GM12878 (cell line): ENCODE measurements at regions of chr5 and their contacts with region 1.

Region 1: GRCh38 chr5:45578270-45578669 is 117.9 kb downstream of the HCN1 start:
- DNase-seq: no peak
- ATAC-seq: no peak
- H3K4me3 ChIP-seq: no peak overlapping the region
- H3K27ac ChIP-seq: no peak overlapping the region
- H3K4me1 ChIP-seq: no peaks in the 10 kb centered on the region
- H3K27me3 ChIP-seq: no peaks in the 10 kb centered on the region
- CTCF ChIP-seq: no peak
- EP300 ChIP-seq: no peak
- POLR2A ChIP-seq: no peak
- RAD21 ChIP-seq: no peak

Region 2: DNA sequence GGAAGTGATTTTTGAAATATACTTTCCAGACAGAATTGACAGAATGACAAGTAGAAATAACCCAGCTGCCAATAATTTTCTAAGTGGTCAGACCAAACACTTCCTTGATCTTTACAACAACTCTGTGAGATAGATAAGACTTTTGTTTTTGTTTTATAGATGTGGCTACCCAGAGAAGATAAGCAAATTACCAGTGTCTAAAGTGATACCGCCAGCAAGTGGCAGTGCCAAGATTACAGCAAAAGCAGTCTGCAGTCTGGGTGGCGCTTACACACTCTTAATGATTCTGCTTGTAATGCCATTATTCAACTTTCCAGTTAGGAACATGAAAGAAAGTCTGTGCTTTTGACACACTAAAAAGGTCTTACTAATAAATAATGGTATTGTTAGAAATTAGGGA is 25.8 kb after region 1 on chr5:
- CTCF ChIA-PET with region 1: no interaction called
- POLR2A ChIA-PET with region 1: no interaction called
- RAD21 ChIA-PET with region 1: no interaction called
- SMC1A ChIA-PET with region 1: no interaction called
- in situ Hi-C with region 1: no loop called
- intact Hi-C with region 1: no loop called
- DNase-seq: no peak
- ATAC-seq: no peak
- H3K4me3 ChIP-seq: no peak overlapping the region
- H3K27ac ChIP-seq: no peak overlapping the region
- H3K4me1 ChIP-seq: no peaks in the 10 kb centered on the region
- H3K27me3 ChIP-seq: no peaks in the 10 kb centered on the region
- CTCF ChIP-seq: no peak
- EP300 ChIP-seq: no peak
- POLR2A ChIP-seq: no peak
- RAD21 ChIP-seq: no peak

Region 3: GRCh38 chr5:45617859-45618416 is 39.7 kb after region 1 on chr5:
- CTCF ChIA-PET with region 1: no interaction called
- POLR2A ChIA-PET with region 1: no interaction called
- RAD21 ChIA-PET with region 1: no interaction called
- SMC1A ChIA-PET with region 1: no interaction called
- in situ Hi-C with region 1: no loop called
- intact Hi-C with region 1: loop called (anchors 1 kb)
- DNase-seq: no peak
- ATAC-seq: no peak
- H3K4me3 ChIP-seq: no peak overlapping the region
- H3K27ac ChIP-seq: no peak overlapping the region
- H3K4me1 ChIP-seq: no peaks in the 10 kb centered on the region
- H3K27me3 ChIP-seq: no peaks in the 10 kb centered on the region
- CTCF ChIP-seq: no peak
- EP300 ChIP-seq: no peak
- POLR2A ChIP-seq: no peak
- RAD21 ChIP-seq: no peak

Region 4: DNA sequence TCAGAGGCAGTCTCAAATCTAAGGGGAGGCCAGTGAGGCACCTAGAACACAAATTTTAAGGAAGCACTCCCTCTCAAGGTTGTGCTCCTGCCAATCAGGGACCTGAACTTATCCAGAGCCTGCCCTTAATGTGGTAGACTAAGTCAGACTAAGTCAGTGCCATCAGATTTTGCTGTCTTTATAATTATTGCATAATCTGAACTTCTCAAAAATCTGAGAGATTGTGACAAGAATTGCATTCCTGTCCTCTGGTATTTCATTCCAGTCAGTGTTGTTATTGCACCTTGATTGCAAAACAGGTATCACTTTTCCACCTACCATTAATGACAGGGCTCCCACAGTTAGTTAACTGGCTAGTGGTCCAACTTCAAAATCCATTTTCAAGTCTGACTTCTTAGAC is 315.0 kb after region 1 on chr5:
- CTCF ChIA-PET with region 1: no interaction called
- POLR2A ChIA-PET with region 1: no interaction called
- RAD21 ChIA-PET with region 1: no interaction called
- SMC1A ChIA-PET with region 1: no interaction called
- in situ Hi-C with region 1: no loop called
- intact Hi-C with region 1: no loop called
- DNase-seq: no peak
- ATAC-seq: no peak
- H3K4me3 ChIP-seq: no peak overlapping the region
- H3K27ac ChIP-seq: no peak overlapping the region
- H3K4me1 ChIP-seq: no peaks in the 10 kb centered on the region
- H3K27me3 ChIP-seq: no peaks in the 10 kb centered on the region
- CTCF ChIP-seq: no peak
- EP300 ChIP-seq: no peak
- POLR2A ChIP-seq: no peak
- RAD21 ChIP-seq: no peak